ENCODE measurements at regions of chr11 and their contacts with region 1.

Region 1: GRCh38 chr11:114340311-114341131 is 44.3 kb downstream of the NNMT start:
- DNase-seq: peak; percentile 50
- ATAC-seq: peak; percentile 79
- H3K4me3 Mint-ChIP-seq: peak overlapping the region; percentile 49
- H3K27ac Mint-ChIP-seq: no peak overlapping the region
- H3K4me1 Mint-ChIP-seq: peaks cover 6% of the 10 kb centered on the region
- H3K27me3 Mint-ChIP-seq: peaks cover 8% of the 10 kb centered on the region
- CTCF ChIP-seq: peak; percentile 86

Region 2: GRCh38 chr11:114610984-114611944 is 270.7 kb after region 1 on chr11:
- CTCF ChIA-PET with region 1: no interaction called
- POLR2A ChIA-PET with region 1: no interaction called
- intact Hi-C with region 1: loop called (anchors 10 kb)
- DNase-seq: no peak
- ATAC-seq: no peak
- H3K4me3 Mint-ChIP-seq: no peak overlapping the region
- H3K27ac Mint-ChIP-seq: no peak overlapping the region
- H3K4me1 Mint-ChIP-seq: no peaks in the 10 kb centered on the region
- H3K27me3 Mint-ChIP-seq: no peaks in the 10 kb centered on the region
- CTCF ChIP-seq: no peak